ENCODE measurements at regions of chr4 and their contacts with region 1.

Region 1: GRCh38 chr4:113106108-113106507 is 56.7 kb downstream of the ANK2 start:
- DNase-seq: no peak
- ATAC-seq: no peak

Region 2: DNA sequence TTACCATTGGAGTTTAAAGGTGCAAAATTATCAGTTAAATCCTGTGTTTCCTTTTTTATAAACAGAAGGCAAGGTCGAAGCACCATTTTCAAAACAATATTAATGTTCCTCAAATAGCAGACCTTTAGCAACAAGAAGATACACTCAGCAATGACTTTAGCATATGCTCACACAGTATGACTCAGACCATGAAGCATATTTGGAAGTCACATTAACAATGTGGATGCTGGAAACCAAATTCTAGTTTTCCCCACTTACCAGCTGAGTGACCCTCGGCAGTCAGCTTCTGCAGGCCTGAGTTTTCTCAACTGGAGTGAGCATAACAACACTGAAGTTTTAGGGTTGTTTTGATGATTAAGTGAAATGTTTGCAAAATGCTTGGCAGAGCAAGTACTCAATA is 73.9 kb after region 1 on chr4:
- intact Hi-C with region 1: loop called (anchors 10 kb)
- DNase-seq: no peak
- ATAC-seq: no peak

Region 3: DNA sequence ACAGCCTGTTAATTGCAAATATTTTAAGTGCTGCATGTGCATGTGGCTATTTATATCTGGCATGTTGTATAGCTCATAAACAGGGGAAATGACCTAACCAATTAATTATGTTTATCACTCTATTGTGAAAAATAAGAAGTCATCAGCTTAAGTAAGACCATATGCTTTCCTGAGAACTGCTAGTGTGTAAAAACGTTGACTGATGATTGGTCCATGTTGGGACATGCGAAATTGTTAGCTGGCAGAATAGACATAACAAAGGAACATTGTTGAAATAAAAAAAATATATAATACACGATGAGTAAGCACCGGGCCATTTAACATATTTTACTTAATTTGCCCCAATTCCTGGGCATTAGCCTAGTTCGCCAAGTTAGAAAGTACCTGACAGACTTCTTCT is 150.8 kb after region 1 on chr4:
- intact Hi-C with region 1: loop called (anchors 10 kb)
- DNase-seq: no peak
- ATAC-seq: no peak

Region 4: DNA sequence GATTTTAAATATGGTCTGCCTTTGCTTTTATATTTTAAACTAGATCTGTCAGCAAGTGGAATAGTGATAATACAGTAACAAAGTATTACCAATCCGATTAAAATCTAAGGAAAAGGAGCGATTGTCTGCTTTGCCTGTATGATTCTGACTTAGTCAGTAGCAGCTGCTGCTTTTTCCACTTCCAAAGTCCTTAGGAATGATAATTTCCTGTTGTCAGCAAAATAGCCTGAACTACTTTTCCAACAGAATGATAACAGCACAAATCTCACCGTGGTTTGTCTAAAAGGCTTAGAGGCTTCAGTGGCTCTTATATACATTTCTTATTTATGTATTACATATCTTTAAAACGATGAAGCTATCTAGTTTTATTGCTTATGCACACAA is 233.3 kb after region 1 on chr4:
- intact Hi-C with region 1: loop called (anchors 10 kb)
- DNase-seq: no peak
- ATAC-seq: no peak